ENCODE measurements at regions of chr18 and their contacts with region 1.

Region 1: DNA sequence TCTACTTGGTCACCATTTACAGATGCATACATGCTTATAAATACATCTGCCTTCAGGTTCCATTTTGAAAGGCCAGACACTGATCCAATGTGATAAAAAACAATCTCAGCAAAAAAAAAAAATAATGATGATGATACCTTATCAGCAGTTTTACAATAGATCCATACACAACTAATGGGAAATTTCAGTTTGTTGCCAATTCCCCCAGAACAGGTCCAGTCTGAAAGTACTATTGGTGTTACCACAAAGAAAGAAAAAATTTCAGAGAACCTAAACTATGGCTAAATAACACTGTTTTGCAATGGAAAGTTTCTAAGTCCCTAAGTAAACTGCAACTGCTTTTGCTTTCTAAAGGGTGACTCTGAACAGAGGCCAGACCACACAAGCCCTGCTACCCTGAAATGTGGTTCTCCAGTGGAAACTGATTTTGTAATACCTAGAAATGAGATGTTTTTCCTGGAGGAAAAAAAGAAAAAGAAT is 54.1 kb downstream of the LPIN2 start:
- DNase-seq: peak; percentile 87
- H3K4me3 Mint-ChIP-seq: peak overlapping the region; percentile 82
- H3K27ac Mint-ChIP-seq: peak overlapping the region; percentile 99
- H3K4me1 Mint-ChIP-seq: peaks cover 78% of the 10 kb centered on the region
- H3K27me3 Mint-ChIP-seq: no peaks in the 10 kb centered on the region

Region 2: GRCh38 chr18:2571200-2572143 is 387.4 kb before region 1 on chr18 and contains the starts of genes METTL4 and NDC80:
- intact Hi-C with region 1: loop called (anchors 5 kb)
- DNase-seq: peak; percentile 96
- H3K4me3 Mint-ChIP-seq: peak within 1 kb of the TSS; percentile 97
- H3K27ac Mint-ChIP-seq: peak within 1 kb of the TSS; percentile 98
- H3K4me1 Mint-ChIP-seq: peaks cover 50% of the 10 kb centered on the region
- H3K27me3 Mint-ChIP-seq: no peaks in the 10 kb centered on the region
- total RNA-seq, gene METTL4: 17.7 and 18.4 TPM in 2 replicates
- total RNA-seq, gene NDC80: 42.4 and 50.5 TPM in 2 replicates

Region 3: GRCh38 chr18:2655178-2655953 is 303.5 kb before region 1 on chr18 and contains the start of gene SMCHD1:
- intact Hi-C with region 1: loop called (anchors 5 kb)
- DNase-seq: peak; percentile 96
- H3K4me3 Mint-ChIP-seq: peak within 1 kb of the TSS; percentile 94
- H3K27ac Mint-ChIP-seq: peak within 1 kb of the TSS; percentile 100
- H3K4me1 Mint-ChIP-seq: peaks cover 30% of the 10 kb centered on the region
- H3K27me3 Mint-ChIP-seq: no peaks in the 10 kb centered on the region
- total RNA-seq, gene SMCHD1: 98.4 and 109 TPM in 2 replicates

Region 4: GRCh38 chr18:2758309-2758708 is 200.6 kb before region 1 on chr18:
- intact Hi-C with region 1: no loop called
- DNase-seq: no peak
- H3K4me3 Mint-ChIP-seq: no peak overlapping the region
- H3K27ac Mint-ChIP-seq: peak overlapping the region; percentile 12
- H3K4me1 Mint-ChIP-seq: peaks cover 18% of the 10 kb centered on the region
- H3K27me3 Mint-ChIP-seq: no peaks in the 10 kb centered on the region

Region 5: GRCh38 chr18:2971741-2972552 is 13.1 kb after region 1 on chr18:
- intact Hi-C with region 1: loop called (anchors 1 kb)
- DNase-seq: peak; percentile 92
- H3K4me3 Mint-ChIP-seq: peak overlapping the region; percentile 83
- H3K27ac Mint-ChIP-seq: peak overlapping the region; percentile 92
- H3K4me1 Mint-ChIP-seq: peaks cover 80% of the 10 kb centered on the region
- H3K27me3 Mint-ChIP-seq: no peaks in the 10 kb centered on the region

Region 6: GRCh38 chr18:2994603-2995432 is 36.0 kb after region 1 on chr18:
- intact Hi-C with region 1: loop called (anchors 1 kb)
- DNase-seq: peak; percentile 92
- H3K4me3 Mint-ChIP-seq: peak overlapping the region; percentile 75
- H3K27ac Mint-ChIP-seq: peak overlapping the region; percentile 93
- H3K4me1 Mint-ChIP-seq: peaks cover 76% of the 10 kb centered on the region
- H3K27me3 Mint-ChIP-seq: no peaks in the 10 kb centered on the region

Region 7: DNA sequence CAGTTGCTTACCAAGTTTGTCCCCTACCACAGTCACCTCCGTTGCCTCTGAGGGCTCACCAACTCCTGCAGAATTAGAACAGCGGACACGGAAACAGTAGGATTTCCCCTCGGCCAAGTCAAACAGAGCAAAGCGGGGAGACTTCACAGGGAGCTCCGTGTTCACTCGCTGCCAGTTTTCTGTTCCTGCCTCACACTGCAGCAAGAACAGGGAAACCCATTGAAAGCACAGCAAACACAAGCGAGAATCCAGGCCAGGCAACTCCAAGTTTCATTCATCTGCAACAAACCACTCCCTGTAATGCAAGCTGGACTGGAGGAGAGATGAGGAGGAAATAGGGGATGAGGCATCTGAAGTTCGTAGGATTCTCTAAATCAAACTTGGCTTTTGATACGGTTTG is 176.7 kb after region 1 on chr18:
- intact Hi-C with region 1: no loop called
- DNase-seq: peak; percentile 47
- H3K4me3 Mint-ChIP-seq: no peak overlapping the region
- H3K27ac Mint-ChIP-seq: no peak overlapping the region
- H3K4me1 Mint-ChIP-seq: peaks cover 2% of the 10 kb centered on the region
- H3K27me3 Mint-ChIP-seq: peaks cover 1% of the 10 kb centered on the region

Region 8: DNA sequence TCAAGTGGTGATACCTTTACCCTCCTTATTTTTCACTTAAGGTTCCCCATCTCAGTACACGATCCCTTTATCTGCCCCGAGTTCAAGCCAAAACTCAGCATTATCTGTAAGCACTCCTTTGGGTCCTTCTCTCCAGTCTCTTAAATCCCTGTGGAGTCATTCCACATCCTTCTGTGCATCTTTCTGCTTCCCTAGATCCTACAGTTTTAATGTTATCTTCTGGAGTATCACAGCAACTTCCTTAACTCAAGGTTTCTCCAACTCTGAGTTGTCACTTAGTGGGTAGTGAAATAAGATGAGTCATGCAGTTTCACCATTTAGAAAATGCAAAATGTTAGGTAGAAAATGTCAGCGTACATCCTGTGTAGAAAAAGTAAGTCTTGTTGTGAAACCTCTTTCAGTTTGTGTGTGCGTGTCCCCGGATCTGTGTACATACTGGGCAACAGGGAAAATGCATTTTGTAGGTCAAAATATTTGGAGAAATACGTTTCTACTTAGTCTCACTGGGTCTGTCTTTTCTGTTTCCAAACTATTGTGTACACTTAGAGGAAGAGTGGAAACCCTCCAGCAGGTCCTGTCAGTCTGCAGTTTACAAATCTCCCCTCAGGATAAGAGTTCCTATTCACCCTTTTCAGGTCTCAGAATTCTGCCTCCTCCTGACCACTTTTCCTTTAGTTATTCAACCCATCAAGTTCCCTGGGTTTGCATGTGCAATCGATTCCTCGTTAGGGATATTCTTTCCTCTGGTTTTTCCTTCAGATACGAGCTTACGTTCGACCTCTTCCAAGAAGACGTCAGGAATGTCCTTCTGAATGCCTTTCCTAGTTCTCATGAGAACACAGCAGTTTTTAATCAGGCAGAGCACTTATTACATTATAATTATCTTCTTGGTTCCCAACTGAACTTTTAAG is 645.9 kb after region 1 on chr18:
- intact Hi-C with region 1: loop called (anchors 5 kb)
- DNase-seq: peak; percentile 82
- H3K4me3 Mint-ChIP-seq: no peak overlapping the region
- H3K27ac Mint-ChIP-seq: no peak overlapping the region
- H3K4me1 Mint-ChIP-seq: peaks cover 20% of the 10 kb centered on the region
- H3K27me3 Mint-ChIP-seq: no peaks in the 10 kb centered on the region

Measured in activated CD4-positive, alpha-beta T cell treated with anti-CD3 and anti-CD28 coated beads, Interleukin-2, amount 10 ng/mL, durations not matched to agents 24 days and 14 days (primary cell).